Activated CD4-positive, alpha-beta T cell treated with anti-CD3 and anti-CD28 coated beads, Interleukin-2, amount 10 ng/mL, durations not matched to agents 24 days and 14 days (primary cell): ENCODE measurements at regions of chr2 and their contacts with region 1.

Region 1: DNA sequence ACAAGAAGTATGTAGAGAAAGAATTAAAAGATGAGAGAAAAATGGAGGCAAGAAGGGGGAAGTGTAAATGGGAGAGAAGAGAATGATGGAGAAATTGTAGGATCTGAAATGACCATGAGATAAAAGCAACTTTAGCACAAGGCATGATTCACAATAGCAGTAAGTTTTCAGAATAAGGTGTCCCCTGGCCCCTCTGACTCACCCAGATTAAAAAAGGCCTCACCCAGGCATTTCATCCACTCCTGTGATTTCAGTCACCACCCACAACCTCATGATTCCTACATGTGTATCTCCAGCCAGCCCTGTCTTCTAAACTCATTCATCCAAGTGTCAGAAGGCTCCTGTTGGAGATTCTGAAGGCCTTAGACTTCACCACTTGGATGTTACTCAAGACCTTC is 56.6 kb downstream of the SP100 start:
- DNase-seq: peak; percentile 72
- H3K4me3 Mint-ChIP-seq: peak overlapping the region; percentile 5
- H3K27ac Mint-ChIP-seq: peak overlapping the region; percentile 85
- H3K4me1 Mint-ChIP-seq: peaks cover 34% of the 10 kb centered on the region
- H3K27me3 Mint-ChIP-seq: no peaks in the 10 kb centered on the region

Region 2: GRCh38 chr2:230383453-230383852 is 89.2 kb before region 1 on chr2:
- intact Hi-C with region 1: no loop called
- DNase-seq: no peak
- H3K4me3 Mint-ChIP-seq: no peak overlapping the region
- H3K27ac Mint-ChIP-seq: no peak overlapping the region
- H3K4me1 Mint-ChIP-seq: peaks cover 7% of the 10 kb centered on the region
- H3K27me3 Mint-ChIP-seq: no peaks in the 10 kb centered on the region

Region 3: DNA sequence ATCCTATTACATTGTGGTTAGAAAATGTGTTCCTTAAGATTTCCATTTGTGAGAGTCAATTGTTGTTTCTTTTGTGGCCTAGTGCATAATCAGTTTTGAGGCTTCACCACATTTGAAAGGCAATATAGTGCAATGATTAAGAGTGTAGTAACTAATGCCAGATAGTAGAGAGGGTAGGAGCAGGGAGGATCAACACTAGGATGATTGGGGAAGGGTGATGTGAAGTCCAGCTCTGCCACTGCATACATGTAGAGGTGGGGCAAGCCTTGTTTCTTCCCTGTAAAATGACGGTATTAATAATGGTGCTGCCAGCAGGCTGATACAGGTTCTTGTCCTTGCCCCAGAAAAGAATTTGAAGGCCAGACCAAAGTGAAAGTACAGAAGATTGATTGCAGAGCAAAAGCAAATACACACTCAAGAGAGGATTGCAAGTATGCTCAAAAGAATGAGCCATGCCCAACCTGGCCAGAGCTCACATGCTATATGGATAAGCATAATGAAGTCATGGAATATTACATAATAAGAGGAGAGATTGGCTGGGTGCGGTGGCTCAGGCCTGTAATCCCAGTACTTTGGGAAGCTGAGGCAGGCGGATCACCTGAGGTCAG is 48.7 kb before region 1 on chr2:
- intact Hi-C with region 1: no loop called
- DNase-seq: no peak
- H3K4me3 Mint-ChIP-seq: peak overlapping the region; percentile 66
- H3K27ac Mint-ChIP-seq: peak overlapping the region; percentile 70
- H3K4me1 Mint-ChIP-seq: peaks cover 78% of the 10 kb centered on the region
- H3K27me3 Mint-ChIP-seq: no peaks in the 10 kb centered on the region

Region 4: GRCh38 chr2:230447455-230448451 is 24.9 kb before region 1 on chr2:
- intact Hi-C with region 1: loop called (anchors 2 kb)
- DNase-seq: peak; percentile 82
- H3K4me3 Mint-ChIP-seq: peak overlapping the region; percentile 59
- H3K27ac Mint-ChIP-seq: peak overlapping the region; percentile 87
- H3K4me1 Mint-ChIP-seq: peaks cover 55% of the 10 kb centered on the region
- H3K27me3 Mint-ChIP-seq: no peaks in the 10 kb centered on the region

Region 5: DNA sequence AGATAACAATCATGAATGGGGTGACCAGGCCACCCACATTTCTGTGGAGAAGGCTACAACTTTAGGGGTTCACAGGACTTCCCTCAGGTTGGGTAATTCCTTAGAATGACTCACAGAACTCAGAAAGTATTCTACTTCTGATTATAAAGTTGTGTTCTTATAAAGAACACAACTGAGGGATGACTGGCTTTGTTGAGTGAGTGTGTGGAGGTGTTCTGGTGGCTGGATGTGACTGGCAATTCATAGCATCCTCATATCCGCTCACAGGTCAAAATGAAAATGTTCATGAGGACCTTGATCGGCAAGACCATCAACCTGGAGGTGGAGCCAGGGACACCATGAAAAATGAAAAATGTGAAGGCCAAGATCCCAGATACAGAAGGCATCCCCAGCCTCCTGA is 96.7 kb after region 1 on chr2:
- intact Hi-C with region 1: loop called (anchors 1 kb)
- DNase-seq: no peak
- H3K4me3 Mint-ChIP-seq: no peak overlapping the region
- H3K27ac Mint-ChIP-seq: peak overlapping the region; percentile 43
- H3K4me1 Mint-ChIP-seq: peaks cover 6% of the 10 kb centered on the region
- H3K27me3 Mint-ChIP-seq: no peaks in the 10 kb centered on the region